ENCODE measurements at regions of chr7 and their contacts with region 1.

Region 1: DNA sequence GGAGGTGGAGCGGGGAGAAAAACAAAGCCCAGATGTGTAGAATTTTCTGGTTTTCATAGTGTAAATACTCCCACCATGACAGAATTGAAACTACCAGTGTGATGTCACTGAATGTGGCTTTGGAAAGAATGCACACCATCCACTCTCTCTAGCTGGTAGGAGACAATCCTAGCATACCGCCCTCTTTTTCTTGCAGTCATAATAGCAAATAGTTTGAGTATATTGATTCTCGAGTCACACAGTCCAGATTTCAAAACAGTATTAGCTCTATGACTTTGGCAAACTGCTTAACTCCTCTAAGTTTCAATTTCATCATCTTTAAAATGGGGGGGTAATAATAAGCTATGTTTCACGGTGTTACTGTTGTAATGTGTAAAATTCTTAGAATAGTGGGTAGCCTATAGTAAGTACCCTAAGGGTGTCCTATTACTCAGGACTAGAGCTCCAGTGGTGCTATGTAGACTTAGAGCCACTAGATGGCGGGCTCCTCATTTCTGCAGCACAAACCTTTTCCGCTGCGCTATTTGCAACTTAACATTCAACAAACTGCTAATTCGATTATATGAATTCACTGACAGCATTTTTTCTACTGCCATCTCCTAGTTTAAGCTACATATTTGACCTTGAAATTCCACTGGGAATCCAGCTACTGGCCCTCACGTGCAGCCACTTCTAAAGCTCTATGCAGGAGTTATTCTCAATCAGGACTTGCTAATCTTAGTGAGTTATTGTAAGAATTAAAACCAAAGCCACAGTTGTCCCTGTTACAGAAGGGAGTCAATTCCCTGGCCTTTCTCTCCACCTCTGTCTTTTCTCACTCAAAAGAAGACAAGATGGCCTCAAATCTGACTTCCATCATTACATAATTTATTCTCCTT is 18.7 kb downstream of the TAS2R40 start:
- DNase-seq: peak; percentile 43 to 88 (median 66)
- ATAC-seq: peak; percentile 99
- H3K4me3 ChIP-seq: no peak overlapping the region
- H3K4me3 Mint-ChIP-seq: peak overlapping the region; percentile 7
- H3K27ac ChIP-seq: no peak overlapping the region
- H3K27ac Mint-ChIP-seq: no peak overlapping the region
- H3K4me1 ChIP-seq: peaks cover 12% of the 10 kb centered on the region
- H3K4me1 Mint-ChIP-seq: peaks cover 31% of the 10 kb centered on the region
- H3K27me3 ChIP-seq: peaks cover 0 to 6% of the 10 kb centered on the region in 2 experiments
- H3K27me3 Mint-ChIP-seq: peaks cover 10% of the 10 kb centered on the region
- CTCF ChIP-seq: peak; percentile 95

Region 2: GRCh38 chr7:143263266-143264195 is 23.0 kb after region 1 on chr7 and contains the start of gene GSTK1:
- CTCF ChIA-PET with region 1: interaction called, 16 read pairs
- POLR2A ChIA-PET with region 1: interaction called, 12 read pairs
- intact Hi-C with region 1: loop called in 1 of 2 experiments (anchors 2 kb)
- DNase-seq: peak; percentile 53 to 87 (median 77)
- ATAC-seq: peak; percentile 96
- H3K4me3 ChIP-seq: peak within 1 kb of the TSS; percentile 98
- H3K4me3 Mint-ChIP-seq: peak within 1 kb of the TSS; percentile 98
- H3K27ac ChIP-seq: peak within 1 kb of the TSS; percentile 74
- H3K27ac Mint-ChIP-seq: peak within 1 kb of the TSS; percentile 95
- H3K4me1 ChIP-seq: peaks cover 49% of the 10 kb centered on the region
- H3K4me1 Mint-ChIP-seq: peaks cover 64% of the 10 kb centered on the region
- H3K27me3 ChIP-seq: no peaks in the 10 kb centered on the region
- H3K27me3 Mint-ChIP-seq: no peaks in the 10 kb centered on the region
- CTCF ChIP-seq: no peak
- total RNA-seq, gene GSTK1: 245 to 259 TPM

Region 3: GRCh38 chr7:143287935-143288826 is 47.7 kb after region 1 on chr7 and contains the start of gene CASP2:
- CTCF ChIA-PET with region 1: interaction called, 19 read pairs
- POLR2A ChIA-PET with region 1: interaction called, 10 read pairs
- intact Hi-C with region 1: no loop called
- DNase-seq: peak; percentile 97 to 100 (median 99)
- ATAC-seq: peak; percentile 95
- H3K4me3 ChIP-seq: peak within 1 kb of the TSS; percentile 95
- H3K4me3 Mint-ChIP-seq: peak within 1 kb of the TSS; percentile 96
- H3K27ac ChIP-seq: peak within 1 kb of the TSS; percentile 68 to 76
- H3K27ac Mint-ChIP-seq: peak within 1 kb of the TSS; percentile 88
- H3K4me1 ChIP-seq: peaks cover 43% of the 10 kb centered on the region
- H3K4me1 Mint-ChIP-seq: peaks cover 65% of the 10 kb centered on the region
- H3K27me3 ChIP-seq: no peaks in the 10 kb centered on the region
- H3K27me3 Mint-ChIP-seq: no peaks in the 10 kb centered on the region
- CTCF ChIP-seq: peak; percentile 57
- total RNA-seq, gene CASP2: 19.1 to 21.9 TPM

Region 4: GRCh38 chr7:143305423-143306070 is 65.0 kb after region 1 on chr7:
- CTCF ChIA-PET with region 1: interaction called, 92 read pairs
- POLR2A ChIA-PET with region 1: interaction called, 14 read pairs
- intact Hi-C with region 1: loop called (anchors 1 kb)
- DNase-seq: peak; percentile 53 to 81 (median 65)
- ATAC-seq: peak; percentile 74
- H3K4me3 ChIP-seq: no peak overlapping the region
- H3K4me3 Mint-ChIP-seq: no peak overlapping the region
- H3K27ac ChIP-seq: no peak overlapping the region
- H3K27ac Mint-ChIP-seq: peak overlapping the region; percentile 5
- H3K4me1 ChIP-seq: peaks cover 17% of the 10 kb centered on the region
- H3K4me1 Mint-ChIP-seq: peaks cover 25% of the 10 kb centered on the region
- H3K27me3 ChIP-seq: no peaks in the 10 kb centered on the region
- H3K27me3 Mint-ChIP-seq: no peaks in the 10 kb centered on the region
- CTCF ChIP-seq: peak; percentile 64

Measured in CD4-positive, alpha-beta T cell (primary cell).